ENCODE measurements at regions of chr4 and their contacts with region 1.

Region 1: GRCh38 chr4:174365018-174365587 is 81.4 kb downstream of the CEP44 start:
- DNase-seq: peak in 1 of 2 donors; percentile 57
- ATAC-seq: no peak
- H3K4me3 ChIP-seq: no peak overlapping the region
- H3K4me3 Mint-ChIP-seq: no peak overlapping the region
- H3K27ac ChIP-seq: no peak overlapping the region
- H3K27ac Mint-ChIP-seq: no peak overlapping the region
- H3K4me1 ChIP-seq: no peaks in the 10 kb centered on the region
- H3K4me1 Mint-ChIP-seq: no peaks in the 10 kb centered on the region
- H3K27me3 ChIP-seq: no peaks in the 10 kb centered on the region
- H3K27me3 Mint-ChIP-seq: no peaks in the 10 kb centered on the region
- CTCF ChIP-seq: peak; percentile 77

Region 2: GRCh38 chr4:174408563-174409552 is 43.8 kb after region 1 on chr4:
- intact Hi-C with region 1: no loop called
- DNase-seq: no peak
- ATAC-seq: no peak
- H3K4me3 ChIP-seq: no peak overlapping the region
- H3K4me3 Mint-ChIP-seq: no peak overlapping the region
- H3K27ac ChIP-seq: no peak overlapping the region
- H3K27ac Mint-ChIP-seq: no peak overlapping the region
- H3K4me1 ChIP-seq: no peaks in the 10 kb centered on the region
- H3K4me1 Mint-ChIP-seq: no peaks in the 10 kb centered on the region
- H3K27me3 ChIP-seq: no peaks in the 10 kb centered on the region
- H3K27me3 Mint-ChIP-seq: no peaks in the 10 kb centered on the region
- CTCF ChIP-seq: no peak

Region 3: DNA sequence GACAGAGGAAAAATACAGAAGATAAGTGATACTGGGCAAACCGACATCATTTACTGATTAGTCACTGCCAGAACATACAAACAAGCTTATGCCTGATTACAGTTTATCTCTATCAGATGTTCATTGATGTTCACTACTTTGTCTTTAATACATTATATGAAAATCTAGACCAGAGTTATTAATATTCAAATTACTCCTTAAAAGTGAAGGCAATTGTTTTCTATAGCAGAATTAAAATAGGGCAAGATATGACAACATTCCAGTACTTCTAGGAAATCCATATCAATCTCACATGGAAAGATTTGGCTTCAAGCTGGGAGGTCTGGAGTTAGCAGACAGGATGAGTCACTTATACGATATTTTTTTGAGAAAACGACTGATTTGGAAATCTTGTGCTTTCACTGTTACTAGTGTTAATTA is 125.4 kb after region 1 on chr4:
- intact Hi-C with region 1: no loop called
- DNase-seq: no peak
- ATAC-seq: no peak
- H3K4me3 ChIP-seq: no peak overlapping the region
- H3K4me3 Mint-ChIP-seq: no peak overlapping the region
- H3K27ac ChIP-seq: no peak overlapping the region
- H3K27ac Mint-ChIP-seq: no peak overlapping the region
- H3K4me1 ChIP-seq: no peaks in the 10 kb centered on the region
- H3K4me1 Mint-ChIP-seq: no peaks in the 10 kb centered on the region
- H3K27me3 ChIP-seq: no peaks in the 10 kb centered on the region
- H3K27me3 Mint-ChIP-seq: no peaks in the 10 kb centered on the region
- CTCF ChIP-seq: no peak

Region 4: DNA sequence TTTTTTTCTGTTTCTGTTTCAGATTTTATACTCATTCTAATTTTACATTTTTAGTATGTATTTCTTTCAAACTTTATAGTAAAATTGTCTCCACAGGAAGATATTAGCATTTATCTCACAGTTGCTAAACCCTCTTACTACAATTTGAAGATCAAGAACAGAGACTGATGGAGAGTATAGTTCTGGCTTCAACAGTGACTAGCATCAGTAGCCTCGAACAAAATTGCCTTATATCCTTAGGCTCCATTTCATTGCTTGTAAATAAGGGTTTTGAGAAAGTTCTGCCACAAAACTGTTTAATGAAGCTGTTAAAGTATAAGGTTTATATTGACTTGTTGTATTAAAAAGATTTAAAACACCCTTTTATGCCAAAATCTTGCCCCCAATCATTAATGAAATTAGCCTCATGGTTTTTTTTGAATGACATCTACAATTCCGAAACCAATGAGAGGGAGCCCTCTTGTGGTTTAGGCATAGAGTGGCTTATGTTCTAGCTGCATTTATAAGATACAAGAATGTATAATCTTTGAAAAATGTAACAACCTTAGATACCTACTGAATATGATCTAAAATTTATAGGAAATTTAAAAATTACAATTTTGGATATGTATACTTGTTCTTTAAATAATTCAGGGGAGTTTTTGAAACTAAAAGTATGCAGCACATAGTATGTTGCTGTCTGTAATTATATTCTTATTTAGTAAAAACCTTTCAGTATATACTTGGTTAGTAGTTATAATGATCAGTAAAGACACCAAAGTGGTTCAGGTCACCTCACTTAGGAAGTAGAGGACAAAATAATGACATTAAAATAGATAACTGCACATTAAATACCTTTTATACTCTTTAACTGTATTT is 267.0 kb after region 1 on chr4:
- intact Hi-C with region 1: loop called (anchors 1 kb)
- DNase-seq: peak in 1 of 2 donors; percentile 56
- ATAC-seq: peak; percentile 40 to 68 (median 63)
- H3K4me3 ChIP-seq: no peak overlapping the region
- H3K4me3 Mint-ChIP-seq: no peak overlapping the region
- H3K27ac ChIP-seq: no peak overlapping the region
- H3K27ac Mint-ChIP-seq: no peak overlapping the region
- H3K4me1 ChIP-seq: no peaks in the 10 kb centered on the region
- H3K4me1 Mint-ChIP-seq: no peaks in the 10 kb centered on the region
- H3K27me3 ChIP-seq: no peaks in the 10 kb centered on the region
- H3K27me3 Mint-ChIP-seq: no peaks in the 10 kb centered on the region
- CTCF ChIP-seq: peak; percentile 69

Region 5: GRCh38 chr4:174714393-174715211 is 349.5 kb after region 1 on chr4:
- intact Hi-C with region 1: loop called (anchors 1 kb)
- DNase-seq: peak in 1 of 2 donors; percentile 37
- ATAC-seq: peak in 2 of 3 donors; percentile 45 to 55
- H3K4me3 ChIP-seq: no peak overlapping the region
- H3K4me3 Mint-ChIP-seq: no peak overlapping the region
- H3K27ac ChIP-seq: no peak overlapping the region
- H3K27ac Mint-ChIP-seq: no peak overlapping the region
- H3K4me1 ChIP-seq: no peaks in the 10 kb centered on the region
- H3K4me1 Mint-ChIP-seq: no peaks in the 10 kb centered on the region
- H3K27me3 ChIP-seq: no peaks in the 10 kb centered on the region
- H3K27me3 Mint-ChIP-seq: no peaks in the 10 kb centered on the region
- CTCF ChIP-seq: no peak

Region 6: DNA sequence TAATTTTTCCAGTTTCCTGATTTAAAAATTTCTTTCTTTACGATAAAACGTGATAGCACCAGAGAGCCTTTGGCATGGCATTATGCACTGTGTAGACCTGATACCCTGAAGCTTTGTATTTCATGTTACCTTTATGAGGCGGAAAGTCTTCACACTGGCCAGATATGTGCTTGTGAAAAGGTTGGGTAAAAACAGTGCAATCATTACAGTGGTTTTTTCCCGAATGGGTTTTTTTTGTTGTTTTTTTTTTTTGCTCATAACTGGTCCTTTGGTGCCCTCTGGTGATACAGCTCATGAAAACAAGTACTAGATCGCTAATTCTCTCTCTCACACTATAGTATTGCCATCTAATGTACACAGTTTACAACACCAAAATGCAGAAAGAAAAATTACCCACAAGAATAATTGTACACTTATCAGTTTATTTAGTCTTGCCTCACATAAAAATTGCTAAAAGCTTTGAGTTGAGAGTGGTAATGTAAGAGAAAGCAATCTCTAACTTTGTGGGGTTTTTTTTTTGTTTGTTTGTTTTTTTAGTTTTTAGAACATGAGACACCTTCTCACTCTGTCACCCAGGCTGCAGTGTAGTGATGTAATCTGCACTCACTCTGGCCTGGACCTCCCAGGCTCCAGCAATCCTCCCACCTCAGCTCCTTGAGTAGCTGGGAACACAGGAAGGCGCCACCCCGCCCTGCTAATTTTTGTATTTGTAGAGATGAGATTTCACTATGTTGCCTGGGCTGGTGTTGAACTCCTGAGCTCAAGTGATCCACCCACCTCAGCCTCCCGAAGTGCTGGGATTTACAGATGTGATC is 1976.0 kb after region 1 on chr4:
- intact Hi-C with region 1: loop called (anchors 2 kb)
- DNase-seq: peak in 1 of 2 donors; percentile 73
- ATAC-seq: peak; percentile 53 to 72 (median 57)
- H3K4me3 ChIP-seq: no peak overlapping the region
- H3K4me3 Mint-ChIP-seq: no peak overlapping the region
- H3K27ac ChIP-seq: no peak overlapping the region
- H3K27ac Mint-ChIP-seq: no peak overlapping the region
- H3K4me1 ChIP-seq: no peaks in the 10 kb centered on the region
- H3K4me1 Mint-ChIP-seq: peaks cover 5 to 11% of the 10 kb centered on the region in 2 donors
- H3K27me3 ChIP-seq: no peaks in the 10 kb centered on the region
- H3K27me3 Mint-ChIP-seq: no peaks in the 10 kb centered on the region
- CTCF ChIP-seq: peak; percentile 66

Measured in natural killer cell (primary cell).